Activated CD4-positive, alpha-beta T cell treated with anti-CD3 and anti-CD28 coated beads, Interleukin-2, amount 10 ng/mL, durations not matched to agents 24 days and 14 days (primary cell): ENCODE measurements at regions of chr13 and their contacts with region 1.

Region 1: DNA sequence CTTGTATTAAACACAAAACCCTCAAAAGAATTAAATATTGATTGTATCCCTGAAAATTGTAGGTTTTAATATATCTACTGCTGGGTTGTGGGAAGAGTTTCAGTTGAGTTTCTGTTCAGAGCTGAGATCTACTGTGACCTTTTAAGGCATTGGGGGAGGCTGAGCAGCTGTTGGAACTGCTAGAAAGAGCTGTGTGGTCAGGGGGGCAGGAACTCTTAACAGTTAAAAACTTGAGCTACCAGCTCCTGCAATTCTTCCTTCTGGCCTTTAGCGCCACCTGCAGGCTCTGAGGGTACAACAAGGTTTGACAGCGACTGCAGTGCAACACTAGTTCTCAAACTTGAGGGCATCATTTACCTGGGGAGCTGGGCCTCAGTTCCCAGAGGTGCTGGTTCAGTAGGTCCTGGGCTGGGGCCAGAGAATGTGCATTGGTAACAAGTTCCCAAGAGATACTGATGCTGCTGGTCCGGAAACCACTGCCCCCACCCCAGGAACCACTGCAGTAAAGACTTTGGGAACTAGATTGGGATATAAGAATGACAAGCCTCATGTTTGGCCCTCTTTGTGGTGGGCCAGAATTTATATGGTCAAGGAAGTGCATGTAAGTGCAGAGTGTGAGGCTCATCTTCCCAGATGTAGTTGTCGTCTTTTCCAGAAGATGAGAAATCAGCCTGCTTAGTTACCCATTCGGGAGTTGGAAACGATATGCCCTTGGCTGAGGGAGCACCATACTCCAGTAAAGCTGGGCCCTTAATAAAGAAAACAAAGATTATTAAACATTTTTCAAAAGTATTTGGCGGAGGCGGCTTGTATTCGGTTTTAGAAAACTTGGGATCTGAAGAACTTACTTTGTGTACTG is 2.6 kb downstream of the RNASEH2B start:
- DNase-seq: peak; percentile 98
- H3K4me3 Mint-ChIP-seq: peak overlapping the region; percentile 98
- H3K27ac Mint-ChIP-seq: peak overlapping the region; percentile 99
- H3K4me1 Mint-ChIP-seq: peaks cover 52% of the 10 kb centered on the region
- H3K27me3 Mint-ChIP-seq: no peaks in the 10 kb centered on the region

Region 2: GRCh38 chr13:49976314-49977258 is 935.6 kb before region 1 on chr13:
- intact Hi-C with region 1: loop called (anchors 2 kb)
- DNase-seq: peak; percentile 91
- H3K4me3 Mint-ChIP-seq: no peak overlapping the region
- H3K27ac Mint-ChIP-seq: no peak overlapping the region
- H3K4me1 Mint-ChIP-seq: peaks cover 6% of the 10 kb centered on the region
- H3K27me3 Mint-ChIP-seq: no peaks in the 10 kb centered on the region

Region 3: GRCh38 chr13:50081679-50082425 is 830.3 kb before region 1 on chr13:
- intact Hi-C with region 1: loop called (anchors 1 kb)
- DNase-seq: peak; percentile 99
- H3K4me3 Mint-ChIP-seq: peak overlapping the region; percentile 100
- H3K27ac Mint-ChIP-seq: peak overlapping the region; percentile 100
- H3K4me1 Mint-ChIP-seq: peaks cover 45% of the 10 kb centered on the region
- H3K27me3 Mint-ChIP-seq: peaks cover 5% of the 10 kb centered on the region

Region 4: GRCh38 chr13:50229960-50230661 is 682.1 kb before region 1 on chr13:
- intact Hi-C with region 1: loop called (anchors 5 kb)
- DNase-seq: peak; percentile 60
- H3K4me3 Mint-ChIP-seq: peak overlapping the region; percentile 32
- H3K27ac Mint-ChIP-seq: peak overlapping the region; percentile 20
- H3K4me1 Mint-ChIP-seq: peaks cover 51% of the 10 kb centered on the region
- H3K27me3 Mint-ChIP-seq: peaks cover 26% of the 10 kb centered on the region

Region 5: DNA sequence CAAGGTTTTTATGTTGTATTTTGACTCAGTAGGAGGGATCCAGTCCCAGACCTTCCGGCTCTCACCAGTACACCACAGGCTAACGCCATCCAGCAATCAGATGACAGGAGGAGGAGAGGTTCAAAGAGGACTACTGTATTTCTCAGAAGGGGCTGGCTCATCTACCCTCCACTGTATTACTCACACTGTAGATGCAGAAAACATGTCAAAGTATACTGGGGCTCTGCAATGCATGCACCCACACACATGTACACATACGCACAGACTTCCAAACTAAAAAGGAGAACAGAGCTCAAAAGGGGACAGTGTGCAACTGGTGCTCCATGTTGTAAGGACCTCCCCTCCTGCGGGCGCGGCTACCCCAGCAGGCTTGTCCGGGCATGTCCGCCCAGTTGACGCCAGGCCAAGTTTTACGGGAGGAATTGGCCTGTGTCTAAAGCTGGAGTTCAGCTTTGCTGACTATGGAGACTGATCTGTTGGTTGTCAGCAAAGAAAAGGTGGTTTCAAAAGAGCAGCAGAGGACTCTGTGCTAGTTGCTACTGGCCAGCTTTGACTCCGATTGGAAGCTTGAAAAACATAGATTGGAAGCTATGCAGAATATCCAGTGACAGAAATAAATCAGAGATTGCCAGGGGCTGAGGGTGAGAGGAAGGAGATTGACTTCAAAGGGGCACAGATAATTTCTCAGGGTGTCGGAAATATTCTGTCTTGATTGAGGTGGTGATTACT is 382.8 kb before region 1 on chr13:
- intact Hi-C with region 1: loop called (anchors 5 kb)
- DNase-seq: peak; percentile 70
- H3K4me3 Mint-ChIP-seq: peak overlapping the region; percentile 8
- H3K27ac Mint-ChIP-seq: peak overlapping the region; percentile 66
- H3K4me1 Mint-ChIP-seq: peaks cover 34% of the 10 kb centered on the region
- H3K27me3 Mint-ChIP-seq: peaks cover 21% of the 10 kb centered on the region

Region 6: DNA sequence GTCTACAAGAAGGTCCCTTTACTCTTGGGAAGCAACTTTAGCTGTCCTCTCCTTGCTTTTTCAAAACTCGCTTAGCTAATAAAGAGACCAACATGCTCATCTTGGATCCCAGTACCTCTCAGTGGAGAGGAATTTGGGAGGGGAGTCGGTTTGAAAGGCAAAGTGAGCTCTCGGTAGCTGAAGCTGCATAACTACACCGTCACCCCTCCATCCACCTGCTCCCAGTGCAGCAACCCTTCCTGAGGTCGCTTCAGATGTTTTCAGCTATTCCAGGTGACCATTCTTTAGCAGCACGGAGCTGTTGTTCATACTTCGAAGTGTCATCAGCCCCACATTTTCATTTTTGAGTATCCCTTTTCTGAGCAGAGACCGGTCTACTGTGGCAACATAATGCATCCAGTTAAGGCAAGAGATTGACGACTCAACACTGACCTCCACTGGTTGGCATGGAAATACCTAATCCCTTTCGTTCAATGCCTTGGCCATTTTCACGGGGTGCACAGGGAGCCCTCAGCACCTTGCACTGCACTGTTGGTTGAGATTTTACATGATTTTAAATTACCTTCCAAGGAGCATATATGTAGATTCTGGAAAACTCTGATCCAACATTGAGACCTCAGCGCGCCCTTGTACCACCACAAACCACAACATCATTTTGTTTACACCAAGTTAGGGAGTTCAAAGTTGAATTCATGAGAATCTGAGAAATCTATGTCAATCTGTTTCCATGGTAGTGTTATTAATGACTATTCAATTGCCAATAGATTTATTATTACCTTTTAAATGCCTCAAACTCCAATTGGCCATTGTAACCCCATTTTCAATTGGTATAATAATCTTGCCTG is 110.9 kb before region 1 on chr13:
- intact Hi-C with region 1: loop called (anchors 1 kb)
- DNase-seq: peak; percentile 91
- H3K4me3 Mint-ChIP-seq: no peak overlapping the region
- H3K27ac Mint-ChIP-seq: no peak overlapping the region
- H3K4me1 Mint-ChIP-seq: peaks cover 18% of the 10 kb centered on the region
- H3K27me3 Mint-ChIP-seq: no peaks in the 10 kb centered on the region

Region 7: DNA sequence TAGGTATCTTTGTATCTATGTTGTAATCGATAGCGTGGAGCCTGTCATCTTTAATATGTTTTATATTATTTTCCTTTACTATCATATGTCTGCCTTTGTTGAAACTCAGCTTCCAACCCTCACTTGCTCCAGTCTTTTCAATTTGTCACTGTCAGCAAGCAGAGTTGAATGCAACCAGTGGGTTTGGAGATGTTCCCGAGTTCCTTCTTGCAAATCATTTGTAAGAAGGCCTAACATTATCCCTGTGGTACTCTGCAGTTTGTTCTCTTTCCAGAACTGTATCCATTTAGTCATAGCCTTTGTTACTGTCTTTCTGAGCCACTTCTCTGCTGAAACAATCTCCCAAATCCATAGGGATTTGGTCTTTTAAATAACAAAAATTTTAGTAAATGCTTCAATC is 39.2 kb after region 1 on chr13:
- intact Hi-C with region 1: no loop called
- DNase-seq: no peak
- H3K4me3 Mint-ChIP-seq: no peak overlapping the region
- H3K27ac Mint-ChIP-seq: no peak overlapping the region
- H3K4me1 Mint-ChIP-seq: no peaks in the 10 kb centered on the region
- H3K27me3 Mint-ChIP-seq: no peaks in the 10 kb centered on the region

Region 8: DNA sequence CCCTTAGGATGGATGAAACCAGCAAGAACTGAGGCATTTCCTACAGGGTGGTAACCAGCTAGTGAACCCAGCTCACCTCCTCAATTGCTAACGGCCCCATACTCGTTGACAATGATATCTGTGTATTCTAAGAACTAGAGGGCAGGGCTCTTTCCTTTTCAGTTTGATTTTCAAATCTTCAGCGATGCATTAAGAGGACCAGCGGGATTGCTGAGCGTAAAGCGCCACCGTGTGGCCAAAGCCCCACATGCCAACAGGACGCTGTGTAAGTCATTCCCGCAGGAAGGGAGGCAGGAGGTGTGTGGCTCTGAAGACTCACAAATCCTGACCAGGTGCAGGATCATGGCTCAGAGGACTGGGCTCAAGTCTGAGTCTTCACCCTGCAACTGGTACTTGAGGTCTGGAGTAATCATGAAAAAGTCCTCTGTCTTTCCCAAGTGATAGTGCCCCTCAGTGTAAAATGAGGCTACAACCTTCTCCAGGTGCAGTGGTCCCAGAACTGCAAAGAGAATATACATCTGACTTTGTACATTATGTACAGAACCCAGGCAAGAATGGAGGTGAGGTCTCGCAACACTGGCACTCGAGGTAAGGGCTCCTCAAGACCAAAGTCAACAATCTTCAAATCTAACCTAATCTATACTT is 158.0 kb after region 1 on chr13:
- intact Hi-C with region 1: loop called (anchors 1 kb)
- DNase-seq: peak; percentile 94
- H3K4me3 Mint-ChIP-seq: no peak overlapping the region
- H3K27ac Mint-ChIP-seq: no peak overlapping the region
- H3K4me1 Mint-ChIP-seq: peaks cover 18% of the 10 kb centered on the region
- H3K27me3 Mint-ChIP-seq: peaks cover 23% of the 10 kb centered on the region

Region 9: DNA sequence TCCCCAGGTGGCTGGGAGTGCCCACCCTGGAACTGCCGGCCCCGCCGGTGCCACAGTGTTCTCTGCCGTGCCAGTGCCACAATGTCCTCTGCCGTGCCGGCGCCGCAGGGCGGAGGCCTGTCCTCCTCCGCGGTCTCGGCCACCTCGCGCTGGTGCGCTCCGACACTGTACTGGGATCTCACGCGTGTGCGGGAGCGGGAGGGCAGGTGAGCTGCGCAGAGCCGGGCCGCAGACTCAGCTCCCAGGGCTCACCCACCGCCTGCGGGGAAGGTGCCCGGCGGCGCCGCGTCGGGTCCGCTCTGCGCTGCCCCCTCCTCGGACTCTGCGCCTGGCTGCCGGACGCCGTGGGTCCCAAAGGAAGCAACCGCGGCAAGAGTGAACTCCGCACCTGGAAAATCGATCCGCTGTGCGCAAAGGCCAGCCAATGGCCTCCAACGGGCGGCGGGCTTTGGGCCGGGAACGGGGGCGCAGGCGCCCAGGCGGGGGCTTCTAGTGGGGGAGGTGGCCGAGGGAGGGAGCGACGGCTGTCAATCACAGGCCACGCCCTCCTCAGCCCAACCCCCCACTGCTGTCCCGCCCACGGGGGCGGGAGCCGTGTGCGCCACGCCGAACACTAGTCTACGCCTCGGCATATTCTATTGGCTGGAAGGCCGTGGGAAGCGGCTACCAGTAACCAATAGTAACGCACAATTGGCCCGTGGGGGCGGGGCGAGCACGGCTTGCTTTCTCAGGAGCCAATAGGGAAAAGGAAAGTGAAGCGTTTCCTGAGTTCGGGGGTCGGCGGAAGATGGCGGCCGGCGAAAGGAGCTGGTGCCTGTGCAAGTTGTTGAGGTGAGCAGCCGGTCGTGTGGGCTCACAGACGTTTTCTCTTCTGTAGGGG is 1099.7 kb after region 1 on chr13 and contains the start of gene ALG11:
- intact Hi-C with region 1: no loop called
- DNase-seq: peak; percentile 100
- H3K4me3 Mint-ChIP-seq: peak within 1 kb of the TSS; percentile 99
- H3K27ac Mint-ChIP-seq: peak within 1 kb of the TSS; percentile 93
- H3K4me1 Mint-ChIP-seq: peaks cover 8% of the 10 kb centered on the region
- H3K27me3 Mint-ChIP-seq: peaks cover 34% of the 10 kb centered on the region
- total RNA-seq, gene ALG11: 26.7 and 28.0 TPM in 2 replicates